ENCODE measurements at regions of chr20 and their contacts with region 1.

Region 1: DNA sequence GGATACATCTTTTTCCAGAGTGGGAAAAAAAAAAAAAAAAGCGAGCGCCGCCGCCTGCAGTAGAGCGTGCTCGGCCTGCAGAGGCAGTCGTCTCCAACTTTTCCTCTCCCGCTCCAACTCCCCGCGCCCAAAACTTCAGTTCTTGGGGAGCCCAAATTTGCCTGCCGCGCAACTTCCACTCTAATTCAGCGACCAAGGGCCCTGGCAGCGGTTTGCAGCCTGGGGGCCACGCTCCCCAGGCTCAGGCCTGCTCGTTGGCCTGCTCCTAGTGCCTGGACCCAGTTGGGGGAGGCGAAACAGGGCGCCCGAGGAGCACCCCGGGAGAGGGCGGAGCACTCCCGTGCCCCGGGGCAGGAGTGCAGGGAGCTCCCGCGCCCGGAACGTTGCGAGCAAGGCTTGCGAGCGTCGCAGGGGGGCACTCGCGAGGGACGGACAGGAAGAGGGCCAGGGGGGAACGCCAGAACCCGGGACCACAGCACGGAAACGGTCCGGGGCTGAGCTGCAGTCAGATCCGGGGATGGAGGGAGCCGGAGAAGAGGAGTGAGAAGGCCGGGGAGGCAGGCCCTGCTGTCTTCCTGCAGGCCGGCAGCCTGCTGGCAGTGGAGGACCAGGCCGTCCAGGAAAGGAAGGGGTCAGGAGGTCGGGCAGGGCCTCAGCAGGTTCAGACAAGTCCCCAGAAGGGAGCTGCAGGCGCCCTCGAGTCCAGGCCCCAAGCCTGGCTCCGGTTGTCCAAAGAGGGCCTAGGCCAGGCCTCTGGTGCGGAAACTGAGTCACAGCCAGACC is at the start of gene STX16:
- DNase-seq: peak; percentile 80 to 83
- ATAC-seq: peak; percentile 85 to 91
- H3K4me3 ChIP-seq: peak within 1 kb of the TSS; percentile 90 to 99 (median 98)
- H3K27ac ChIP-seq: peak within 1 kb of the TSS; percentile 85 to 98 (median 97)
- H3K4me1 ChIP-seq: peaks cover 44% of the 10 kb centered on the region in 2 donors
- H3K27me3 ChIP-seq: no peaks in the 10 kb centered on the region
- CTCF ChIP-seq: peak; percentile 57 to 71 (median 59)
- POLR2A ChIP-seq: peak; percentile 49 to 64
- total RNA-seq, gene STX16: 9.2 to 34.3 (median 20.4) TPM

Region 2: GRCh38 chr20:58236612-58237330 is 414.2 kb before region 1 on chr20:
- in situ Hi-C with region 1: loop called in 1 of 4 experiments (anchors 25 kb)
- intact Hi-C with region 1: loop called (anchors 2 kb)
- DNase-seq: peak; percentile 32 to 46
- ATAC-seq: peak; percentile 66 to 84
- H3K4me3 ChIP-seq: peak overlapping the region; percentile 38 to 60 (median 50)
- H3K27ac ChIP-seq: no peak overlapping the region
- H3K4me1 ChIP-seq: no peaks in the 10 kb centered on the region
- H3K27me3 ChIP-seq: no peaks in the 10 kb centered on the region
- CTCF ChIP-seq: peak; percentile 84 to 98 (median 92)
- POLR2A ChIP-seq: no peak

Region 3: DNA sequence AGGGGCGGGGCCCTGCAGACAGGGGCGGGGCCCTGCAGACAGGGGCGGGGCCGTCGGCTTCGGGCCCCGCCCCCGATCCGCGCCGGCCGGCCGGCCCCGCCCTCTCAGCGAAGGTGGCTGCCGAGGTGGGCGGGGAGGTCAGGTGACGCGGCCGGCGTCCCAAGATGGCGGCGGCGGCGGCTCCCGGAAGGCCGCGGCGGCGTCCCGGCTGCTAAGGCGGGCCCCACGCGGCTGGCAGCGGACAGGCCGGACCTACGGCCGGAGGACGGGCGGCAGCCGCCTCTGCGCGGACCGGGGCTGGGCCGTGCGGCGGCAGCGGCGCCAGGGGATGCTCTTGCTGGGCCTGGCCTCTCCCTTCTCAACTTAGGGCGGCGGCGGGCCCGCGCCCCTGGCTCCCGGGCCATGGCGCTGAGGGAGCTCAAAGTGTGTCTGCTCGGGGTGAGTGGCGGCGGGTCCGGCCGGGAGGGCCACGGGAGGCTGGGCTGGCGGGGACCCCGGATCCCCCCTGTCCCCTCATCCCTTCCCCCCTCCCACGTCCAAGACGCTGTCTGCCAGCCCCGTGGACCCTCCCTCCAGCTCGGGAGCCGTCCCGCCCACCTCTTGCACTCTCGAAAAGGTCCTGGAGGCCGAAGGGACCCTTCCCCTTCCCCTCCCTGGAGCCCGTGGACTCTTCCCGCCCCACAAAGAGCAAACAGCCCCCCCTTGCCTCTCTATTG is 341.2 kb before region 1 on chr20 and contains the start of gene RAB22A:
- in situ Hi-C with region 1: no loop called
- intact Hi-C with region 1: loop called (anchors 5 kb)
- DNase-seq: peak; percentile 64 to 70
- ATAC-seq: peak; percentile 89 to 92
- H3K4me3 ChIP-seq: peak within 1 kb of the TSS; percentile 63 to 94 (median 86)
- H3K27ac ChIP-seq: peak within 1 kb of the TSS; percentile 80 to 89 (median 83)
- H3K4me1 ChIP-seq: peaks cover 15 to 16% of the 10 kb centered on the region in 2 donors
- H3K27me3 ChIP-seq: no peaks in the 10 kb centered on the region
- CTCF ChIP-seq: peak in 2 of 5 experiments; percentile 11 to 27
- POLR2A ChIP-seq: peak; percentile 95 to 96
- total RNA-seq, gene RAB22A: 8.0 to 10.9 (median 9.3) TPM

Region 4: GRCh38 chr20:58829531-58829941 is 178.6 kb after region 1 on chr20:
- in situ Hi-C with region 1: no loop called
- intact Hi-C with region 1: no loop called
- DNase-seq: peak; percentile 15 to 75
- ATAC-seq: peak; percentile 86 to 95
- H3K4me3 ChIP-seq: no peak overlapping the region
- H3K27ac ChIP-seq: peak overlapping the region in 3 of 4 donors; percentile 24 to 63 (median 60)
- H3K4me1 ChIP-seq: peaks cover 0 to 19% of the 10 kb centered on the region in 2 donors
- H3K27me3 ChIP-seq: no peaks in the 10 kb centered on the region
- CTCF ChIP-seq: peak in 1 of 5 experiments; percentile 8
- POLR2A ChIP-seq: no peak

Region 5: GRCh38 chr20:58850693-58851174 is 199.8 kb after region 1 on chr20 and contains the start of gene GNAS-AS1:
- in situ Hi-C with region 1: no loop called
- intact Hi-C with region 1: loop called (anchors 10 kb)
- DNase-seq: peak; percentile 48 to 80
- ATAC-seq: peak; percentile 50 to 63
- H3K4me3 ChIP-seq: peak within 1 kb of the TSS; percentile 53 to 64 (median 58)
- H3K27ac ChIP-seq: peak within 1 kb of the TSS in 1 of 4 donors; percentile 44
- H3K4me1 ChIP-seq: no peaks in the 10 kb centered on the region
- H3K27me3 ChIP-seq: peaks cover 17 to 34% (median 26%) of the 10 kb centered on the region in 3 donors
- CTCF ChIP-seq: no peak
- POLR2A ChIP-seq: no peak
- total RNA-seq, gene GNAS-AS1: not detected

Region 6: DNA sequence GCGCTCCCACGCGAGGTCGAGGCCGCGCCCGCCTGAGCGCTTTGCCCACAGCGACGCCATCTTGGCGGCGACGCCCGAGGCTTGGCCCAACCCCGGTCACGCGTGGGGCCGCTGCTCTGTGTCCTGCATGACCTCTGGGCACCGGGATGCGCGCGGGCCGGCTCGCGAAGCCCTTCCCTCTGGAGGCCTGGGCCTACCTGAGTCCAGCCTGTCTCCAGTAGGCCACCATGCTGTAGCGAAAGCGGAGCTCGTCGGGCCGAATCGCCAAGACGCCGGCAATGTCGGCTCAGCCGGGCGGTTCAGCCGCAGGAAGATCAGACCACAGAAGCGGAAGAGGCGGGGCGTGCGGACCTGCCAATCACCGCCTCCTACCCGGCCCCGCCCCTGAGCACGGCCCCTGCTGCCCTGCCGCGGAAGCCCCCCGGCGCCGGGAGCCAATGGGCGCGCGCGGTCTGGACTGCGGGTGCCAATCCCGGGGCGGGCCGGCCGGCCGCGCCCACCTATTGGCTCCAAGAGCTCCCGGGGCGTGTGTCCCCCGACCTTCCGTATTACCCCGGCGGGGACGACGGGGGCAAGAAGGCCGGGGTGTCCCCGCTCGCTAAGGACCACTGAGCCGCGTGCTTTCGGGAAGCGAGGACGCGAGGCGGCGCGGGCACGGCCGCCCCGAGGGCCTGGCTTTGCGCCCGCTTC is 381.2 kb after region 1 on chr20 and contains the start of gene ATP5F1E:
- in situ Hi-C with region 1: no loop called
- intact Hi-C with region 1: loop called (anchors 5 kb)
- DNase-seq: peak; percentile 95
- ATAC-seq: peak; percentile 95 to 97
- H3K4me3 ChIP-seq: peak within 1 kb of the TSS; percentile 79 to 92 (median 88)
- H3K27ac ChIP-seq: peak within 1 kb of the TSS; percentile 89 to 97 (median 95)
- H3K4me1 ChIP-seq: peaks cover 47% of the 10 kb centered on the region in 2 donors
- H3K27me3 ChIP-seq: no peaks in the 10 kb centered on the region
- CTCF ChIP-seq: no peak
- POLR2A ChIP-seq: peak; percentile 96 to 98
- total RNA-seq, gene ATP5F1E: 27.1 to 38.2 (median 33.7) TPM